ENCODE measurements at regions of chr17 and their contacts with region 1.

Region 1: GRCh38 chr17:10226930-10227685 is 28.7 kb upstream of the GAS7 start:
- DNase-seq: peak; percentile 57
- ATAC-seq: peak; percentile 79
- H3K4me3 Mint-ChIP-seq: no peak overlapping the region
- H3K27ac Mint-ChIP-seq: no peak overlapping the region
- H3K4me1 Mint-ChIP-seq: peaks cover 7% of the 10 kb centered on the region
- H3K27me3 Mint-ChIP-seq: no peaks in the 10 kb centered on the region
- CTCF ChIP-seq: no peak

Region 2: DNA sequence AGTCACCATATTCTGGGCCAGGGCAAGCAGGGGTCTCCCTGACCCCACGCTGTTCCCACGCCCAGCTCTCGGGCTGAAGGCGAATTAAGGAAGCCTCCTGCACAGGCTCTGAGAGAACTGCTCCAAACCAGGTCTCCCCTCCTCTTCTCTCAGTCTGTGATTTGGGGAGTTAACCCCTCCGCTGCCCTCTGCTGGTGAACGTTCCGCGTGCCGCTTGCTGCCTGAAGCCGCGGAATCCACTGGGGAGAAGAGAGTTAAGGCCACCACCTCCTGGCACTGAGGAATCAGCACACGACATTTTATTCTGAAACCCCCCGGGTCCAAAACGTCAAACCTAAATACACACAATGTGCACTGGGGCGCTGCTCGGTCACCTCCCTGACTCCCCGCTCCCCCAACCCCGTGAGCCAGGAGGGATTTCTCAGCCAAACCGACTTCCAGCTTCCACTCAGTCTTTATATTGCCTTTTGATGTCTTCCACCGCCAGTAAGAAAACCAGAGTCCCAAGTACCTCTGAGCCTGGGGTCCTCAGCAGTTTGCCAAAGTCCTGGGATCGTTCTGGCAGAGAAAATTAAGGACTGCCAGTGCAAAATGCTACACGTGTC is 267.6 kb before region 1 on chr17:
- CTCF ChIA-PET with region 1: interaction called, 23 read pairs
- POLR2A ChIA-PET with region 1: no interaction called
- intact Hi-C with region 1: no loop called
- DNase-seq: no peak
- ATAC-seq: no peak
- H3K4me3 Mint-ChIP-seq: no peak overlapping the region
- H3K27ac Mint-ChIP-seq: no peak overlapping the region
- H3K4me1 Mint-ChIP-seq: no peaks in the 10 kb centered on the region
- H3K27me3 Mint-ChIP-seq: peaks cover 7% of the 10 kb centered on the region
- CTCF ChIP-seq: no peak

Region 3: GRCh38 chr17:9987779-9988574 is 239.1 kb before region 1 on chr17:
- CTCF ChIA-PET with region 1: interaction called, 7 read pairs
- POLR2A ChIA-PET with region 1: no interaction called
- intact Hi-C with region 1: loop called (anchors 1 kb)
- DNase-seq: no peak
- ATAC-seq: peak; percentile 62
- H3K4me3 Mint-ChIP-seq: no peak overlapping the region
- H3K27ac Mint-ChIP-seq: no peak overlapping the region
- H3K4me1 Mint-ChIP-seq: peaks cover 10% of the 10 kb centered on the region
- H3K27me3 Mint-ChIP-seq: no peaks in the 10 kb centered on the region
- CTCF ChIP-seq: peak; percentile 72

Region 4: GRCh38 chr17:10041916-10042588 is 185.1 kb before region 1 on chr17:
- CTCF ChIA-PET with region 1: no interaction called
- POLR2A ChIA-PET with region 1: interaction called, 5 read pairs
- intact Hi-C with region 1: loop called (anchors 5 kb)
- DNase-seq: no peak
- ATAC-seq: peak; percentile 72
- H3K4me3 Mint-ChIP-seq: peak overlapping the region; percentile 30
- H3K27ac Mint-ChIP-seq: peak overlapping the region; percentile 84
- H3K4me1 Mint-ChIP-seq: peaks cover 55% of the 10 kb centered on the region
- H3K27me3 Mint-ChIP-seq: no peaks in the 10 kb centered on the region
- CTCF ChIP-seq: no peak

Region 5: GRCh38 chr17:10156948-10157607 is 70.0 kb before region 1 on chr17:
- CTCF ChIA-PET with region 1: no interaction called
- POLR2A ChIA-PET with region 1: no interaction called
- intact Hi-C with region 1: no loop called
- DNase-seq: peak; percentile 47
- ATAC-seq: peak; percentile 79
- H3K4me3 Mint-ChIP-seq: peak overlapping the region; percentile 33
- H3K27ac Mint-ChIP-seq: peak overlapping the region; percentile 90
- H3K4me1 Mint-ChIP-seq: peaks cover 32% of the 10 kb centered on the region
- H3K27me3 Mint-ChIP-seq: no peaks in the 10 kb centered on the region
- CTCF ChIP-seq: no peak

Region 6: GRCh38 chr17:10261098-10261497 is 34.0 kb after region 1 on chr17:
- CTCF ChIA-PET with region 1: no interaction called
- POLR2A ChIA-PET with region 1: no interaction called
- intact Hi-C with region 1: no loop called
- DNase-seq: no peak
- ATAC-seq: no peak
- H3K4me3 Mint-ChIP-seq: no peak overlapping the region
- H3K27ac Mint-ChIP-seq: no peak overlapping the region
- H3K4me1 Mint-ChIP-seq: no peaks in the 10 kb centered on the region
- H3K27me3 Mint-ChIP-seq: peaks cover 5% of the 10 kb centered on the region
- CTCF ChIP-seq: no peak

Measured in activated B cell treated with CpG ODN at 0.5 μM for 24 hours (primary cell).